CD4-positive, alpha-beta T cell (primary cell): ENCODE measurements at regions of chr19 and their contacts with region 1.

Region 1: DNA sequence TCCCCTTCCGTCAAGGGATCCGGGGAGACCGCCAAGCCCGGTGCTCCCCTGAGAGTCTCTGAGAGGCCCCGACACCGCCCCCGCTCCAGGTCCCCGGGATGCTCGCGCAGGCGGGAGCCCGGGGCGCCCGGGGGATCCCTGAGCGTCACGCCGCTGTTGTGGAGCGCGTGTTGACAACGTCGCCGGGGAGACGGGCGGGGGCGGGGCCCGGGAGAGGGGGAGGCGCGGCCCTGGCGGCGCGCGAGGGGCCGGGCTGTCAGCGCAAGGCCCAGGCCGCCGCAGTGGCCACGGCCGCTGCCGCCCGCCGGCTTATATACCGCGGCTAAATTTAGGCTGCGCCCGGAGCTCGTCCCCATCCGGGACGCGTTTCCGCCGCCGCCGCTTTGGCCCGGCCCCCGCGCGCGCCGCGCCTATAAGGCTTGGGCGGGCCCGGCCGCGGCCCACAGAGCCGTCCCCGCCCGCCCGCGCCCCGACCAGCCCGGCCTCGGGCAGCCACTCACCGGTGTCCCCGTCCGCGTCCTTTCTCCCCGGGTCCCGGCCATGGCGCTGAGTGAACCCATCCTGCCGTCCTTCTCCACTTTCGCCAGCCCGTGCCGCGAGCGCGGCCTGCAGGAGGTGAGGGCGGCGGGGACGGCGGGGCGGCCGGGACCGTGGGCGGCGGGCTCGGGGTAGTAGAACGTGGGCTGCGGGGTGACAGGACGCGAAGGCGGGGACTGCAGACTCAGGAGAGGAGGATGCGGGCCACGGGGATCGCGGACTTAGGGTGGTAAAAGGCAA is at the start of gene KLF2:
- DNase-seq: peak; percentile 91 to 99 (median 94)
- ATAC-seq: peak; percentile 55
- H3K4me3 ChIP-seq: peak within 1 kb of the TSS; percentile 98
- H3K4me3 Mint-ChIP-seq: peak within 1 kb of the TSS; percentile 83
- H3K27ac ChIP-seq: peak within 1 kb of the TSS; percentile 90 to 100
- H3K27ac Mint-ChIP-seq: peak within 1 kb of the TSS; percentile 97
- H3K4me1 ChIP-seq: peaks cover 42% of the 10 kb centered on the region
- H3K4me1 Mint-ChIP-seq: peaks cover 60% of the 10 kb centered on the region
- H3K27me3 ChIP-seq: no peaks in the 10 kb centered on the region
- H3K27me3 Mint-ChIP-seq: peaks cover 24% of the 10 kb centered on the region
- CTCF ChIP-seq: no peak
- total RNA-seq, gene KLF2: 1,201 to 1,291 TPM

Region 2: GRCh38 chr19:16076154-16076957 is 248.2 kb before region 1 on chr19 and contains the start of gene TPM4:
- CTCF ChIA-PET with region 1: no interaction called
- POLR2A ChIA-PET with region 1: interaction called, 9 read pairs
- intact Hi-C with region 1: loop called in 1 of 2 experiments (anchors 5 kb)
- DNase-seq: peak; percentile 46 to 94 (median 74)
- ATAC-seq: peak; percentile 26
- H3K4me3 ChIP-seq: peak within 1 kb of the TSS; percentile 87
- H3K4me3 Mint-ChIP-seq: peak within 1 kb of the TSS; percentile 85
- H3K27ac ChIP-seq: peak within 1 kb of the TSS; percentile 72 to 83
- H3K27ac Mint-ChIP-seq: peak within 1 kb of the TSS; percentile 94
- H3K4me1 ChIP-seq: peaks cover 83% of the 10 kb centered on the region
- H3K4me1 Mint-ChIP-seq: peaks cover 73% of the 10 kb centered on the region
- H3K27me3 ChIP-seq: no peaks in the 10 kb centered on the region
- H3K27me3 Mint-ChIP-seq: no peaks in the 10 kb centered on the region
- CTCF ChIP-seq: no peak
- total RNA-seq, gene TPM4: 182 to 185 TPM

Region 3: GRCh38 chr19:16247353-16248182 is 77.0 kb before region 1 on chr19:
- CTCF ChIA-PET with region 1: interaction called, 9 read pairs
- POLR2A ChIA-PET with region 1: interaction called, 45 read pairs
- intact Hi-C with region 1: loop called (anchors 1 to 5 kb)
- DNase-seq: peak; percentile 64 to 93 (median 83)
- ATAC-seq: peak; percentile 84
- H3K4me3 ChIP-seq: no peak overlapping the region
- H3K4me3 Mint-ChIP-seq: no peak overlapping the region
- H3K27ac ChIP-seq: no peak overlapping the region
- H3K27ac Mint-ChIP-seq: peak overlapping the region; percentile 31
- H3K4me1 ChIP-seq: peaks cover 17% of the 10 kb centered on the region
- H3K4me1 Mint-ChIP-seq: peaks cover 38% of the 10 kb centered on the region
- H3K27me3 ChIP-seq: no peaks in the 10 kb centered on the region
- H3K27me3 Mint-ChIP-seq: no peaks in the 10 kb centered on the region
- CTCF ChIP-seq: peak; percentile 80

Region 4: GRCh38 chr19:16266586-16266942 is 58.0 kb before region 1 on chr19:
- CTCF ChIA-PET with region 1: no interaction called
- POLR2A ChIA-PET with region 1: interaction called, 14 read pairs
- intact Hi-C with region 1: loop called in 1 of 2 experiments (anchors 5 kb)
- DNase-seq: peak; percentile 40 to 85 (median 60)
- ATAC-seq: peak; percentile 60
- H3K4me3 ChIP-seq: peak overlapping the region; percentile 20
- H3K4me3 Mint-ChIP-seq: peak overlapping the region; percentile 59
- H3K27ac ChIP-seq: peak overlapping the region in 1 of 2 donors; percentile 22
- H3K27ac Mint-ChIP-seq: peak overlapping the region; percentile 87
- H3K4me1 ChIP-seq: peaks cover 70% of the 10 kb centered on the region
- H3K4me1 Mint-ChIP-seq: peaks cover 48% of the 10 kb centered on the region
- H3K27me3 ChIP-seq: no peaks in the 10 kb centered on the region
- H3K27me3 Mint-ChIP-seq: no peaks in the 10 kb centered on the region
- CTCF ChIP-seq: no peak

Region 5: DNA sequence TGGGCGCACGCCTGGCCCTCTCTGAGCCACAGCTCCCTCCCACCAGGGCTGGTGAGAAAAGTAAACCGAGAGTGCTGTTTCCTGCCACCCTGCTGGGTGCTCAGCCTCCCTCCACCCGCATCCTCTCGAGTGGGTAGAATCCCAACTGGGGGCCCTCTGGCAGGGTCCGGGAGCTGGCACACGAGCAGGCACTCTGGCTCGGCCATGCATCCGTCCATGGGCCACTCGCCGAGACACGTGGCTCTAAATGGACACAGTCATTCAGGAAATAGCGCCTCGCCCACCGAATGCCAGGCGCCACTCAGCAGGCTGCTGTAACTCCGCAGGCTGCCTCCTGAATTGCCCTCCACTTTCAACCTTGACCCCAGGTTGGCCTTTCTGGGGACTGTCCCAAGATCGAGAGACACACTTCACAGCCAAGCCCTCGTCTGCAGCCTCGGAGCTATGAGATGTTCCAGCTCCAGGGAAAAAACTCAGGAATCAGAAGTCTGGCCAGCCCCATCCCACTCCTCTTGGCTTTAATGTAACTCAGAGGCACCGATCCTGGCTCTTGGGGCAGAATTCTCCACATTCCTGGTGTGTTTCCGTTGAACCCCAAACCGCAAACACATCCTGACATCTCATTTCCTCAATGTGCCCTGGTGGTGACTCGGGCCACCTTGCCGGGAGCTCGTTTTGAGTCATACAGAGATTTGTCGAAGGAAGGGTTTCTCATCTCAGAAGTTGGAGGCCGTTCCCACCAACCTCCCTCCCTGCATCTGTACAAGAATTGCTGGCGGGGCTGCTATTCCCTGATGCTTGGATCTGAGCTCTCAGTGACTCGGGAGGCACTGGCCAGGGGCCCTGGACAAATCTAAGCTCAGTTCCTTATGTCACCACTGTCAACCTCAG is 14.1 kb after region 1 on chr19:
- CTCF ChIA-PET with region 1: interaction called, 35 read pairs
- POLR2A ChIA-PET with region 1: interaction called, 251 read pairs
- intact Hi-C with region 1: loop called in 1 of 2 experiments (anchors 2 kb)
- DNase-seq: peak in 12 of 14 experiments; percentile 24 to 82 (median 50)
- ATAC-seq: peak; percentile 54
- H3K4me3 ChIP-seq: peak overlapping the region; percentile 40
- H3K4me3 Mint-ChIP-seq: peak overlapping the region; percentile 90
- H3K27ac ChIP-seq: peak overlapping the region; percentile 14 to 46
- H3K27ac Mint-ChIP-seq: peak overlapping the region; percentile 93
- H3K4me1 ChIP-seq: peaks cover 77% of the 10 kb centered on the region
- H3K4me1 Mint-ChIP-seq: peaks cover 72% of the 10 kb centered on the region
- H3K27me3 ChIP-seq: no peaks in the 10 kb centered on the region
- H3K27me3 Mint-ChIP-seq: no peaks in the 10 kb centered on the region
- CTCF ChIP-seq: peak; percentile 17